CD4-positive, alpha-beta T cell (primary cell): ENCODE measurements at regions of chr15 and their contacts with region 1.

Region 1: GRCh38 chr15:48810414-48811317 is at the start of gene CEP152:
- DNase-seq: peak; percentile 95 to 99 (median 98)
- ATAC-seq: peak; percentile 96
- H3K4me3 ChIP-seq: peak within 1 kb of the TSS; percentile 95
- H3K4me3 Mint-ChIP-seq: peak within 1 kb of the TSS; percentile 85
- H3K27ac ChIP-seq: peak within 1 kb of the TSS in 1 of 2 donors; percentile 43
- H3K27ac Mint-ChIP-seq: peak within 1 kb of the TSS; percentile 74
- H3K4me1 ChIP-seq: peaks cover 17% of the 10 kb centered on the region
- H3K4me1 Mint-ChIP-seq: peaks cover 41% of the 10 kb centered on the region
- H3K27me3 ChIP-seq: no peaks in the 10 kb centered on the region
- H3K27me3 Mint-ChIP-seq: no peaks in the 10 kb centered on the region
- CTCF ChIP-seq: no peak
- total RNA-seq, gene CEP152: 5.2 to 6.3 TPM

Region 2: GRCh38 chr15:48330855-48331795 is 479.5 kb before region 1 on chr15 and contains the start of gene DUT:
- CTCF ChIA-PET with region 1: no interaction called
- POLR2A ChIA-PET with region 1: interaction called, 3 read pairs
- intact Hi-C with region 1: loop called in 1 of 2 experiments (anchors 5 kb)
- DNase-seq: peak; percentile 63 to 91 (median 78)
- ATAC-seq: peak; percentile 80
- H3K4me3 ChIP-seq: peak within 1 kb of the TSS; percentile 81
- H3K4me3 Mint-ChIP-seq: peak within 1 kb of the TSS; percentile 100
- H3K27ac ChIP-seq: peak within 1 kb of the TSS; percentile 88 to 90
- H3K27ac Mint-ChIP-seq: peak within 1 kb of the TSS; percentile 99
- H3K4me1 ChIP-seq: peaks cover 14% of the 10 kb centered on the region
- H3K4me1 Mint-ChIP-seq: peaks cover 28% of the 10 kb centered on the region
- H3K27me3 ChIP-seq: no peaks in the 10 kb centered on the region
- H3K27me3 Mint-ChIP-seq: no peaks in the 10 kb centered on the region
- CTCF ChIP-seq: no peak
- total RNA-seq, gene DUT: 60.7 to 65.3 TPM

Region 3: GRCh38 chr15:48877630-48878595 is 67.2 kb after region 1 on chr15 and contains the start of gene EID1:
- CTCF ChIA-PET with region 1: no interaction called
- POLR2A ChIA-PET with region 1: interaction called, 32 read pairs
- intact Hi-C with region 1: loop called (anchors 2 kb)
- DNase-seq: peak; percentile 84 to 98 (median 90)
- ATAC-seq: peak; percentile 93
- H3K4me3 ChIP-seq: peak within 1 kb of the TSS; percentile 92
- H3K4me3 Mint-ChIP-seq: peak within 1 kb of the TSS; percentile 94
- H3K27ac ChIP-seq: peak within 1 kb of the TSS; percentile 68 to 78
- H3K27ac Mint-ChIP-seq: peak within 1 kb of the TSS; percentile 95
- H3K4me1 ChIP-seq: peaks cover 7% of the 10 kb centered on the region
- H3K4me1 Mint-ChIP-seq: peaks cover 23% of the 10 kb centered on the region
- H3K27me3 ChIP-seq: no peaks in the 10 kb centered on the region
- H3K27me3 Mint-ChIP-seq: peaks cover 25% of the 10 kb centered on the region
- CTCF ChIP-seq: no peak
- total RNA-seq, gene EID1: 41.0 to 45.3 TPM

Region 4: DNA sequence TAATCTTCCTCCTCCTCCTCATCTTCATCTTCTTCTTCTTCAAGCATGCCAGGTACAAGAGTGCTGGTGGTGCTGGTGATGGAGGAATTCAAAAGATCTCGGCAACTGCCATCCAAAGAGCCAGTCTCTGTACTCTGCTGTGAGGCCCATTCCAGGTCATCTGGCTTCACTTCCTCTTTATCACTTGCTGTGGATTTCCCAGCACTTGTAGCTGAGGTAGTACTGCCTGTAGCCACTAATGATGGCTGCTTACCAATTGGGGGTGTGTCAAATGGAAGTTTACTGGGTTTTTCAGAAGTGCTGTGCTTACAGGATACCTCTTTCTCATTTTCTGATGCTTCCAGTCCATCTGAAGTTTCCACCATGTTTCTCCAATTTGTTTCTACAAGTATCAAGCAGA is 181.9 kb after region 1 on chr15:
- CTCF ChIA-PET with region 1: no interaction called
- POLR2A ChIA-PET with region 1: no interaction called
- intact Hi-C with region 1: no loop called
- DNase-seq: peak in 1 of 14 experiments; percentile 10
- ATAC-seq: no peak
- H3K4me3 ChIP-seq: no peak overlapping the region
- H3K4me3 Mint-ChIP-seq: no peak overlapping the region
- H3K27ac ChIP-seq: no peak overlapping the region
- H3K27ac Mint-ChIP-seq: no peak overlapping the region
- H3K4me1 ChIP-seq: no peaks in the 10 kb centered on the region
- H3K4me1 Mint-ChIP-seq: no peaks in the 10 kb centered on the region
- H3K27me3 ChIP-seq: no peaks in the 10 kb centered on the region
- H3K27me3 Mint-ChIP-seq: no peaks in the 10 kb centered on the region
- CTCF ChIP-seq: no peak

Region 5: DNA sequence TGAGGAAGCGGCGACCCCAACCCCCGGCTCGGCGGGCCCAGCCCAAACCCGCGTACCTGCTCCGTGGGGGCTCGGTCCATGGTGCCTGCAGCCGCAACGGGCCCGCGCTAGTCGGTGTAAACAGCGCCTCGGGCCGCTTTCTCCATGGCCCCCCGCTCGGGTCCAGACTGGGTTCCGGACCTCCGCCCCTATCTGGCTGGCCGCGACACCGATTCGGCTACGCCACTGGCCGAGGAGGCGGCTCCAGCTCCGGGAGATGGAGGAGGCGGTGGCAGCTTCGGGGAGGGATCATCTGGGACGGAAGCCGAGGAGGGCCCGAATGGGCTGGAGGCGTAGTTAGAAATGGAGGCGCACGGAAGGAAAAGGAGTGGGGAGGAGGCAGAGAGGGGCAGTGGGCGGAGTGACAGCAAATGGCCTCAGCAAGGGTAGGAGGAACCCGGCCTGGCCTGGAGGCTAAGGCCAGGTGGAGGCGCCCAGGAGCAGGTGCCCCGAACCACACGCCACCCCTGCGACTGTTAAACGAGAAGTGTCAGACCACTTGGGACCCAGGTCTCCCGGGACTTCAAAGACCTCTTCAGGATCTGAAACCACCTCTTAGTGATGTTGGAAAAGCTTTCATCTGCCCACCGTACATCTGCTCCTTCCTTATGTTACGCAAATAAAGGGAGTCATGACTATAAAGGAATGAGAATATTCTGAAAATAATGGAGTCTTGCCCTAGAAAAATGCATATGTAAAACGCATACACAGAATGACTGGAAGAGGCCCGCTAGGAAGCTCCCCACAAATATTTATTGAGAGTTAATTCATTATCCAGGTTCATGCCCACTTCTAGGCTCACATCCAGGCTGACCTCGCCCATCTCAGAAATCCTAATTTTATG is 235.8 kb after region 1 on chr15 and contains the start of gene SECISBP2L:
- CTCF ChIA-PET with region 1: no interaction called
- POLR2A ChIA-PET with region 1: interaction called, 5 read pairs
- intact Hi-C with region 1: loop called in 1 of 2 experiments (anchors 5 kb)
- DNase-seq: peak; percentile 79 to 95 (median 84)
- ATAC-seq: peak; percentile 95
- H3K4me3 ChIP-seq: peak within 1 kb of the TSS; percentile 66
- H3K4me3 Mint-ChIP-seq: peak within 1 kb of the TSS; percentile 98
- H3K27ac ChIP-seq: peak within 1 kb of the TSS; percentile 5 to 52
- H3K27ac Mint-ChIP-seq: peak within 1 kb of the TSS; percentile 92
- H3K4me1 ChIP-seq: peaks cover 11% of the 10 kb centered on the region
- H3K4me1 Mint-ChIP-seq: peaks cover 42% of the 10 kb centered on the region
- H3K27me3 ChIP-seq: no peaks in the 10 kb centered on the region
- H3K27me3 Mint-ChIP-seq: no peaks in the 10 kb centered on the region
- CTCF ChIP-seq: no peak
- total RNA-seq, gene SECISBP2L: 55.9 to 56.0 TPM

Region 6: GRCh38 chr15:49169880-49170597 is 359.4 kb after region 1 on chr15 and contains the start of gene GALK2:
- CTCF ChIA-PET with region 1: no interaction called
- POLR2A ChIA-PET with region 1: interaction called, 4 read pairs
- intact Hi-C with region 1: loop called in 1 of 2 experiments (anchors 5 kb)
- DNase-seq: peak; percentile 48 to 94 (median 73)
- ATAC-seq: peak; percentile 98
- H3K4me3 ChIP-seq: peak within 1 kb of the TSS; percentile 76
- H3K4me3 Mint-ChIP-seq: peak within 1 kb of the TSS; percentile 92
- H3K27ac ChIP-seq: peak within 1 kb of the TSS; percentile 77 to 88
- H3K27ac Mint-ChIP-seq: peak within 1 kb of the TSS; percentile 93
- H3K4me1 ChIP-seq: peaks cover 18% of the 10 kb centered on the region
- H3K4me1 Mint-ChIP-seq: peaks cover 52% of the 10 kb centered on the region
- H3K27me3 ChIP-seq: no peaks in the 10 kb centered on the region
- H3K27me3 Mint-ChIP-seq: no peaks in the 10 kb centered on the region
- CTCF ChIP-seq: no peak
- total RNA-seq, gene GALK2: 11.5 to 11.9 TPM